Natural killer cell (primary cell): ENCODE measurements at regions of chr7 and their contacts with region 1.

Region 1: DNA sequence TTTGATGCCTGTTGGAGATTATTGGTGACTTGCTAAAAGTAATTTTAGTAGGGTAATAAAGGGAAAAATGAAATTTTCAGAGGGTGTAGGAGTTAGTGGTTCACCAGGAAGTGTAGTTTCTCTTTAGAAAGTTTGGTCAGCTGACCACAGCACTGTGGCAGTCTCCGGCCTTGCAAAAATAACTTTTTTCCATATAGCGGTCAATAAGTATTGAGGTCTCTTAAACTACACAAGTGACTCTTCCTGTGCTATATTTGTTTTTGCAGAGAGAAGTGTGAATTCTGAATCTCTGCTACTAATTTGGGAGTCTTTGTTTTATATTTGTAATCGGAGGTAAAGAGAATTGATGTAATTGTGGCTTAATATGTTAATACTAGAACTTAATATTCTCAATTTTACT is 24.3 kb downstream of the PTPN12 start:
- DNase-seq: peak in 1 of 2 donors; percentile 36
- ATAC-seq: peak; percentile 40 to 65 (median 64)
- H3K4me3 ChIP-seq: no peak overlapping the region
- H3K4me3 Mint-ChIP-seq: peak overlapping the region; percentile 85
- H3K27ac ChIP-seq: peak overlapping the region; percentile 69
- H3K27ac Mint-ChIP-seq: peak overlapping the region; percentile 97 to 99
- H3K4me1 ChIP-seq: peaks cover 44% of the 10 kb centered on the region
- H3K4me1 Mint-ChIP-seq: peaks cover 79 to 84% of the 10 kb centered on the region in 2 donors
- H3K27me3 ChIP-seq: no peaks in the 10 kb centered on the region
- H3K27me3 Mint-ChIP-seq: no peaks in the 10 kb centered on the region
- CTCF ChIP-seq: no peak

Region 2: GRCh38 chr7:77415823-77416622 is 145.3 kb before region 1 on chr7 and contains the start of gene GSAP:
- intact Hi-C with region 1: loop called (anchors 2 kb)
- DNase-seq: peak; percentile 57 to 74
- ATAC-seq: peak; percentile 68 to 82 (median 72)
- H3K4me3 ChIP-seq: peak within 1 kb of the TSS; percentile 84
- H3K4me3 Mint-ChIP-seq: peak within 1 kb of the TSS; percentile 89
- H3K27ac ChIP-seq: peak within 1 kb of the TSS; percentile 96
- H3K27ac Mint-ChIP-seq: peak within 1 kb of the TSS; percentile 95 to 99
- H3K4me1 ChIP-seq: peaks cover 24% of the 10 kb centered on the region
- H3K4me1 Mint-ChIP-seq: peaks cover 63 to 70% of the 10 kb centered on the region in 2 donors
- H3K27me3 ChIP-seq: no peaks in the 10 kb centered on the region
- H3K27me3 Mint-ChIP-seq: no peaks in the 10 kb centered on the region
- CTCF ChIP-seq: no peak
- total RNA-seq, gene GSAP: 202 to 302 (median 301) TPM

Region 3: DNA sequence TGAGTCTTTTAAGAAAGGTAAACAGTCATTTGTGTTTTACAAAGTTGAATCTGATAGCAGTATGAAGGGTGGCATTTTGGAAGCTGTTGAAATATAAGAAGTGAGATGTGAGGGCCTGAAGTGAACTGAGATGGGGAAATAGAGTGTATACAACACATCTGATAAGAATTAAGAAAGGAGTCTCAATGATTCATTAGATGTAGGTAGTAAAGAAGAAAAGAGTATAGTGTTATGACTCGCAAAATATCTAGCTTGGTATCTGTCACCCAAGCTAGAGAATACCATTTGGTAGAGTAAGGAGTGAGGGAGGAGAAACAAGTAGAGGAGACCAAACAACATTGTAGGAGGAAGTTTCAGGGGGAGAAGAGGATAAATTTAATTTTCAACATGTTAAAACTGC is 18.9 kb before region 1 on chr7:
- intact Hi-C with region 1: loop called (anchors 1 kb)
- DNase-seq: no peak
- ATAC-seq: peak in 2 of 3 donors; percentile 12 to 18
- H3K4me3 ChIP-seq: no peak overlapping the region
- H3K4me3 Mint-ChIP-seq: peak overlapping the region; percentile 77
- H3K27ac ChIP-seq: peak overlapping the region; percentile 44
- H3K27ac Mint-ChIP-seq: peak overlapping the region; percentile 80 to 82
- H3K4me1 ChIP-seq: peaks cover 41% of the 10 kb centered on the region
- H3K4me1 Mint-ChIP-seq: peaks cover 68 to 77% of the 10 kb centered on the region in 2 donors
- H3K27me3 ChIP-seq: no peaks in the 10 kb centered on the region
- H3K27me3 Mint-ChIP-seq: no peaks in the 10 kb centered on the region
- CTCF ChIP-seq: no peak

Region 4: DNA sequence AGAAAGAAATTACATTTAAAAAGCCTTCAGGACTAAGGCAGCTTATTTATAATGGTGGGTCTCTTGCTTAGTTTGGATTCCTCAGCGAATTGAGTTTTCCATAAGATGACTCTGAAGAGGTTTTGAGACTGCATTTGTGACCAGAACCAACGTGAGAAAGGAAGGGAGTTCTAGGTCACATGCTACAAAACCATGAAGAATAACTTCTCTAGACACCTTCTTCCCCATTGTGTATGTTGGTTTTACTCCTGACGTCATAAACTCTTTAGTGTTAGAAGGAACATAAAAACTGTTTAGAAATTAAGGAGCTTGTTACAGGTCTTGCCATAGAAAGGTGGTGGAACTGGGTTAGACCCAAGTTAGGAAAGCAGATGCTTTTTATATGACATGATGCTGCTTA is 13.1 kb before region 1 on chr7:
- intact Hi-C with region 1: loop called (anchors 1 kb)
- DNase-seq: peak in 1 of 2 donors; percentile 56
- ATAC-seq: peak; percentile 70 to 87 (median 87)
- H3K4me3 ChIP-seq: no peak overlapping the region
- H3K4me3 Mint-ChIP-seq: peak overlapping the region; percentile 70
- H3K27ac ChIP-seq: peak overlapping the region; percentile 68
- H3K27ac Mint-ChIP-seq: peak overlapping the region; percentile 80 to 99
- H3K4me1 ChIP-seq: peaks cover 32% of the 10 kb centered on the region
- H3K4me1 Mint-ChIP-seq: peaks cover 78 to 79% of the 10 kb centered on the region in 2 donors
- H3K27me3 ChIP-seq: no peaks in the 10 kb centered on the region
- H3K27me3 Mint-ChIP-seq: no peaks in the 10 kb centered on the region
- CTCF ChIP-seq: no peak

Region 5: DNA sequence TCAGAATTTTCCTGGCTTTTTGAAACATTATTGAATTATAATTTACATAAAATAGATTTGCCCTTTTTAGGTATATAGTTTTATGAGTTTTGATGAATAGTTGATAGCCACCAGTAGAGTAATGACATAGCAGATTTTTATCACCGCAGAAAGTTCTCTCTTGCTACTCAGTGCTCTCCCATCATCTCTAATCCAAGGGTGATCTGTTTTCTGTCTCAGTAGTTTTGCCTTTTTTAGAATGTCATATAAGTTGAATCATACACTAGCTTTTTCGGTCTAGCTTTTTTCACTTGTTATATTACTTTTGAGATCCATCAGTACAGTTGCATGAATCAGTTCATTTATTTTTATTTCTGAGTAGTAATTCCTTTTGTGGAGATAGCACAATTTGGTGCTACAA is 152.8 kb after region 1 on chr7:
- intact Hi-C with region 1: no loop called
- DNase-seq: no peak
- ATAC-seq: no peak
- H3K4me3 ChIP-seq: no peak overlapping the region
- H3K4me3 Mint-ChIP-seq: no peak overlapping the region
- H3K27ac ChIP-seq: no peak overlapping the region
- H3K27ac Mint-ChIP-seq: peak overlapping the region; percentile 56 to 58
- H3K4me1 ChIP-seq: peaks cover 3% of the 10 kb centered on the region
- H3K4me1 Mint-ChIP-seq: peaks cover 55 to 65% of the 10 kb centered on the region in 2 donors
- H3K27me3 ChIP-seq: no peaks in the 10 kb centered on the region
- H3K27me3 Mint-ChIP-seq: no peaks in the 10 kb centered on the region
- CTCF ChIP-seq: no peak